PC-3 (cell line): ENCODE measurements at regions of chr13 and their contacts with region 1.

Region 1: GRCh38 chr13:44160591-44161191 is 212.9 kb upstream of the SERP2 start:
- DNase-seq: peak; percentile 63
- ATAC-seq: peak; percentile 64
- H3K4me3 ChIP-seq: no peak overlapping the region
- H3K27ac ChIP-seq: peak overlapping the region; percentile 100
- H3K4me1 ChIP-seq: peaks cover 34% of the 10 kb centered on the region
- H3K27me3 ChIP-seq: no peaks in the 10 kb centered on the region
- CTCF ChIP-seq: no peak

Region 2: GRCh38 chr13:44218501-44219240 is 58.0 kb after region 1 on chr13:
- CTCF ChIA-PET with region 1: no interaction called
- POLR2A ChIA-PET with region 1: interaction called, 3 read pairs
- intact Hi-C with region 1: loop called (anchors 2 kb)
- DNase-seq: peak; percentile 67
- ATAC-seq: peak; percentile 70
- H3K4me3 ChIP-seq: no peak overlapping the region
- H3K27ac ChIP-seq: peak overlapping the region; percentile 93
- H3K4me1 ChIP-seq: peaks cover 42% of the 10 kb centered on the region
- H3K27me3 ChIP-seq: no peaks in the 10 kb centered on the region
- CTCF ChIP-seq: no peak

Region 3: DNA sequence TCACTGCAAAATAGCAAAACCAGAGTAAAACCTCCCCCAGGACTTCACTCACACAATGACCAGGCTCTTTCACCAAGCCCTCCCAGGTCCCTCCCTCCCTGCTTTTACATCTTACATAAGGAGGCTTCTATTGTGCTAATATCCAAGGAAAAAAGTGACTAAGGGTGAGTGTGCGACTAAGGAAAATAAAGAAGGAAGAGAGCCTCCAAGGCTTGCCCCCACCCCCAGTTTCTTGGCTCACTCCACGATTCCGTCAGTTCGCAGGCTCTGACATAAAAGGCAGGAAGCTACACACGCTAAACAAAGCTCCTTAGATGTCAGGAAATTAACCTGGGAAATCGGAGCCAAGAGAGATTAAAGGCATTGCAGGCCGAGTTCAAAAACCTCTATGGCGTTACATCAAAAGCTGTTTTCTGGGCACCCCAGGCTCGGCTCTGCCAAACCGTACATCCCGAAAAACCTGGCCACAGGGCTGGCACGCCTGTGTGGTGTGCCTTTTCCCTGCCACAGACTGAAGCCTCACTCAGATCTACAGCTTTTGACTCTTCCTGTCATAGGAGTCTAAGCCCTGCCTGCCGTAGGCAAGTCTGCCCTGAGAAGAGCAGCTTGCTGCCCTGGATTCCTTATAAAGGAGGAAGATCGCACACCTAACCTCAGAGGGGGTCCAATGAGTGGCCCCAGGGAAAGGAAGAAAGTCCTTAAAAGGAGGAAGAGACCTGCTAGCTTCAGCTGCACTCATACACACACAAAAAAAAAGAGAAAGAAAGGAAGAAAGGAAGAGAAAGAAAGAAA is 145.9 kb after region 1 on chr13:
- CTCF ChIA-PET with region 1: no interaction called
- POLR2A ChIA-PET with region 1: no interaction called
- intact Hi-C with region 1: loop called (anchors 2 kb)
- DNase-seq: peak; percentile 95
- ATAC-seq: peak; percentile 73
- H3K4me3 ChIP-seq: peak overlapping the region; percentile 47
- H3K27ac ChIP-seq: peak overlapping the region; percentile 100
- H3K4me1 ChIP-seq: peaks cover 73% of the 10 kb centered on the region
- H3K27me3 ChIP-seq: no peaks in the 10 kb centered on the region
- CTCF ChIP-seq: no peak

Region 4: GRCh38 chr13:44312898-44313551 is 152.3 kb after region 1 on chr13:
- CTCF ChIA-PET with region 1: no interaction called
- POLR2A ChIA-PET with region 1: no interaction called
- intact Hi-C with region 1: loop called (anchors 1 kb)
- DNase-seq: peak; percentile 91
- ATAC-seq: peak; percentile 60
- H3K4me3 ChIP-seq: peak overlapping the region; percentile 43; the same call in 1 of the 2 replicates
- H3K27ac ChIP-seq: peak overlapping the region; percentile 100
- H3K4me1 ChIP-seq: peaks cover 72% of the 10 kb centered on the region
- H3K27me3 ChIP-seq: no peaks in the 10 kb centered on the region
- CTCF ChIP-seq: no peak